ENCODE measurements at regions of chr6 and their contacts with region 1.

Region 1: DNA sequence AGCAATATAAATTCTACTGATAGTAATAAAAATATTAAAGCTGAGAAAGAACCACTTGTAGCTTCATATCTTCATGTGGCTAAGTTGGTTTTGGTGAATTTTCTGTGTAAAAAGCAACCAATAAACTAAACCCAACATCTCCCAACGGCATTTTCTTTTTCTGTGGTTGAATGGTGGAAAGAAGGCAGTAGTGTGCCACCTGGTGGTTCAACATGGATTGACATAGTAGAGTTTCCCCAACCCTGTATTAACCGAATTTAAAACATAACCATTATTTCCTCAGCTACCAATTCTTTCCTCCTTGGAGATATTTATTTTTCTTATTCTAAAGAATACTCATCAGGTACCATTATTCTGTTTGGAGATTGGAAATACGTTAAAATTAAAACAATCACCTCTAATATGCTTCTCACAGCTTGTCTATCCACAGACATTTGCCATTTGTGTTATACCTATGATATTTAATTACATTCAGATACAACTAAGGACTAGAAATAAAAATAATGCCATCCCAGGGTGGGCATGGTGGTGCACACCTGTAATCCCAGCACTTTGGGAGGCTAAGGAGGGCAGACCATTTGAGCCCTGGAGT is 117.1 kb upstream of the EEF1E1 start:
- DNase-seq: peak; percentile 32
- H3K4me3 ChIP-seq: no peak overlapping the region
- CTCF ChIP-seq: peak; percentile 70

Region 2: GRCh38 chr6:8131256-8131897 is 88.1 kb before region 1 on chr6:
- in situ Hi-C with region 1: loop called (anchors 5 kb)
- DNase-seq: peak; percentile 55
- H3K4me3 ChIP-seq: no peak overlapping the region
- CTCF ChIP-seq: peak; percentile 69

Region 3: GRCh38 chr6:8157839-8158238 is 61.6 kb before region 1 on chr6:
- in situ Hi-C with region 1: no loop called
- DNase-seq: no peak
- H3K4me3 ChIP-seq: no peak overlapping the region
- CTCF ChIP-seq: no peak